ENCODE measurements at regions of chr3 and their contacts with region 1.

Region 1: DNA sequence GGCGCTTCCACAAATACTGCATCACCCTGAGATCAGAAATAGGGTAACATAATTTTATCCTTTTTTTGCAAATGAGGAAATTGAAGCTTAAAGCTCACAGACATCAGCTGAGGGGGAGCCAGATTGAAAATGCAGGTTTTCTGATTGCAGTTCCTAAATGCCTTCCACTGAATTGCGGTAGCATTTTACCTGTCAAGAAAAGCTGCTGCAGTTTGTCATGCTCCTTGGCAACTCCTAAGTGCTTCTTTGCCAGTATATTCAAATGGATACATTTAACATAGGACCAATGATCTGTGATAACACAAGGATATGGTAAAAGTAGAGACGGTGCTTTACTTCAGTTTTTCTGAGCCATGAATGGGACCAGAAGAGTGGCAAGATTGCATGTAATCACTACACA is 50.5 kb downstream of the SPATA16 start:
- DNase-seq: no peak
- H3K4me3 ChIP-seq: no peak overlapping the region
- H3K27ac ChIP-seq: no peak overlapping the region
- H3K4me1 ChIP-seq: no peaks in the 10 kb centered on the region
- H3K27me3 ChIP-seq: peaks cover 2% of the 10 kb centered on the region
- CTCF ChIP-seq: no peak

Region 2: GRCh38 chr3:173173652-173174051 is 83.2 kb after region 1 on chr3:
- CTCF ChIA-PET with region 1: no interaction called
- dilution Hi-C with region 1: loop called (anchors 5 kb)
- in situ Hi-C with region 1: no loop called
- intact Hi-C with region 1: no loop called
- DNase-seq: no peak
- H3K4me3 ChIP-seq: no peak overlapping the region
- H3K27ac ChIP-seq: no peak overlapping the region
- H3K4me1 ChIP-seq: no peaks in the 10 kb centered on the region
- H3K27me3 ChIP-seq: peaks cover 6% of the 10 kb centered on the region
- CTCF ChIP-seq: no peak